Dorsolateral prefrontal cortex (tissue), 120 donors: ENCODE measurements at regions of chrX and their contacts with region 1.

Region 1: GRCh38 chrX:153507484-153508178 is 9.8 kb upstream of the ATP2B3 start:
- DNase-seq: peak; percentile 76 to 91 (median 84)
- H3K4me3 ChIP-seq: peak overlapping the region in 1 of 59 donors; percentile 8
- H3K27ac ChIP-seq: peak overlapping the region in 1 of 59 donors; percentile 44
- H3K27me3 ChIP-seq: peaks cover 0 to 81% (median 17%) of the 10 kb centered on the region in 45 donors
- CTCF ChIP-seq: peak; percentile 60 to 96 (median 87)

Region 2: GRCh38 chrX:152946681-152947080 is 561.0 kb before region 1 on chrX:
- intact Hi-C with region 1: loop called in 1 of 2 experiments (anchors 5 kb)
- DNase-seq: peak in 2 of 10 donors; percentile 13 to 22
- H3K4me3 ChIP-seq: no peak overlapping the region
- H3K27ac ChIP-seq: no peak overlapping the region
- H3K27me3 ChIP-seq: peaks cover 0 to 70% (median 20%) of the 10 kb centered on the region in 45 donors
- CTCF ChIP-seq: no peak

Region 3: GRCh38 chrX:153032397-153033118 is 475.1 kb before region 1 on chrX:
- intact Hi-C with region 1: loop called (anchors 2 to 5 kb)
- DNase-seq: peak; percentile 53 to 82 (median 68)
- H3K4me3 ChIP-seq: peak overlapping the region in 55 of 59 donors; percentile 9 to 63 (median 43)
- H3K27ac ChIP-seq: peak overlapping the region in 6 of 59 donors; percentile 18 to 70 (median 36)
- H3K27me3 ChIP-seq: peaks cover 0 to 65% (median 9%) of the 10 kb centered on the region in 45 donors
- CTCF ChIP-seq: peak in 55 of 56 donors; percentile 36 to 87 (median 78)

Region 4: GRCh38 chrX:153333768-153334645 is 173.6 kb before region 1 on chrX and contains the start of gene ZNF275:
- intact Hi-C with region 1: loop called in 1 of 2 experiments (anchors 10 kb)
- DNase-seq: peak; percentile 51 to 90 (median 72)
- H3K4me3 ChIP-seq: peak within 1 kb of the TSS in 58 of 59 donors; percentile 33 to 77 (median 64)
- H3K27ac ChIP-seq: peak within 1 kb of the TSS in 19 of 59 donors; percentile 14 to 68 (median 41)
- H3K27me3 ChIP-seq: peaks cover 0 to 48% (median 8%) of the 10 kb centered on the region in 45 donors
- CTCF ChIP-seq: peak in 3 of 56 donors; percentile 18 to 31 (median 20)
- total RNA-seq, gene ZNF275: 11.5 to 24.2 (median 17.8) TPM

Region 5: DNA sequence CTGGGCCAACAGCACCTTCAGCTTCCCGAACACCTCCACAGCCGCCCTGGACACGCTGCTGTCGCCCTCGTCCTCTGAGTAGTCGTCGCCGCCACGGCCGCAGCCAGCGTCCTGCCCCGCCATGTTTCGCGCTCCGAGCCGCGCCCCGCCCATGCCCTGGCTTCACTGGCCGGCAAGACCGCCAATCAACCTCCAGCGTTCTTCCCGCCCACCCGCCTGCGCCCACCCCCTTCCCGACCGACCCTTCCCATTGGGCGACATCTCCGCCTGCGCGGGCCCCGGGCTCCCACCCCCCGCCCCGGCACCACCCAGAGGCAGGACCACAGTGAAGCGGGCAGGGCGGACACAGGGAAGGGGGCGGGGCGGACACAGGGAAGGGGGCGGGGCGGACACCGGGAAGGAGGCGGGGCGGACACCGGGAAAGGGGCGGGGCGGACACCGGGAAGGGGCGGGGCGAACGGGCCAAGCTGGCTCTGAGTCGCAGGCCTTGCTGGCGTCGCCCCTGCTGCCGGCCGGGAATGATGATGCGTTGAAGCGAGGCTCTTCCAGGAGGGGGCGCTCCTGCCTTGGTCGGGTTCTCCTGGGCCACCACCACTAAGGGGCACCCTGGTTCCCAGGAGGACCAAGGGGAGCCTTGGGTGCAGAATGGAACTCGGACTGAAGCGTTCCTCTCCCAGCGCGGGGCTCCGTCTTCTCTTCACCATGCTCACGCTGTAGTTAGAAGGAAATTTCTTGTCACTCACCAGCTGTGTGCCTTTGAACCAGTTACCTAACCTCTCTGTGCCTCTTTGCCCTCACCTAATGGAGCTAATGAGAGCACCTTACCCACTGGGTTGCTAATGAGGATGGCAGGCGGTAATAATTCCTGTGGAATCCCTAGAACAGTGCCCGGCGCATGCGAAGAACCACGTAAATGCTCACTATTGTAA is 36.9 kb before region 1 on chrX and contains the start of gene HAUS7:
- intact Hi-C with region 1: loop called (anchors 2 to 5 kb)
- DNase-seq: peak; percentile 74 to 90 (median 88)
- H3K4me3 ChIP-seq: peak within 1 kb of the TSS; percentile 36 to 77 (median 62)
- H3K27ac ChIP-seq: peak within 1 kb of the TSS in 46 of 59 donors; percentile 16 to 85 (median 69)
- H3K27me3 ChIP-seq: peaks cover 0 to 80% (median 2%) of the 10 kb centered on the region in 45 donors
- CTCF ChIP-seq: peak; percentile 15 to 83 (median 74)
- total RNA-seq, gene HAUS7: 25.8 to 75.1 (median 43.9) TPM